Thyroid gland (tissue), 4 donors: ENCODE measurements at regions of chr11 and their contacts with region 1.

Region 1: GRCh38 chr11:46238967-46239800 is 38.3 kb upstream of the CREB3L1 start:
- DNase-seq: peak; percentile 77 to 80
- H3K4me3 ChIP-seq: peak overlapping the region in 1 of 3 donors; percentile 41
- H3K27ac ChIP-seq: peak overlapping the region in 2 of 3 donors; percentile 45 to 69
- H3K4me1 ChIP-seq: peaks cover 10 to 36% of the 10 kb centered on the region in 2 donors
- H3K27me3 ChIP-seq: no peaks in the 10 kb centered on the region
- CTCF ChIP-seq: peak; percentile 67 to 99 (median 97)
- POLR2A ChIP-seq: no peak

Region 2: GRCh38 chr11:46308631-46309419 is 69.6 kb after region 1 on chr11:
- intact Hi-C with region 1: loop called (anchors 2 kb)
- DNase-seq: peak; percentile 77
- H3K4me3 ChIP-seq: no peak overlapping the region
- H3K27ac ChIP-seq: no peak overlapping the region
- H3K4me1 ChIP-seq: no peaks in the 10 kb centered on the region
- H3K27me3 ChIP-seq: no peaks in the 10 kb centered on the region
- CTCF ChIP-seq: peak; percentile 78 to 84 (median 82)
- POLR2A ChIP-seq: no peak

Region 3: DNA sequence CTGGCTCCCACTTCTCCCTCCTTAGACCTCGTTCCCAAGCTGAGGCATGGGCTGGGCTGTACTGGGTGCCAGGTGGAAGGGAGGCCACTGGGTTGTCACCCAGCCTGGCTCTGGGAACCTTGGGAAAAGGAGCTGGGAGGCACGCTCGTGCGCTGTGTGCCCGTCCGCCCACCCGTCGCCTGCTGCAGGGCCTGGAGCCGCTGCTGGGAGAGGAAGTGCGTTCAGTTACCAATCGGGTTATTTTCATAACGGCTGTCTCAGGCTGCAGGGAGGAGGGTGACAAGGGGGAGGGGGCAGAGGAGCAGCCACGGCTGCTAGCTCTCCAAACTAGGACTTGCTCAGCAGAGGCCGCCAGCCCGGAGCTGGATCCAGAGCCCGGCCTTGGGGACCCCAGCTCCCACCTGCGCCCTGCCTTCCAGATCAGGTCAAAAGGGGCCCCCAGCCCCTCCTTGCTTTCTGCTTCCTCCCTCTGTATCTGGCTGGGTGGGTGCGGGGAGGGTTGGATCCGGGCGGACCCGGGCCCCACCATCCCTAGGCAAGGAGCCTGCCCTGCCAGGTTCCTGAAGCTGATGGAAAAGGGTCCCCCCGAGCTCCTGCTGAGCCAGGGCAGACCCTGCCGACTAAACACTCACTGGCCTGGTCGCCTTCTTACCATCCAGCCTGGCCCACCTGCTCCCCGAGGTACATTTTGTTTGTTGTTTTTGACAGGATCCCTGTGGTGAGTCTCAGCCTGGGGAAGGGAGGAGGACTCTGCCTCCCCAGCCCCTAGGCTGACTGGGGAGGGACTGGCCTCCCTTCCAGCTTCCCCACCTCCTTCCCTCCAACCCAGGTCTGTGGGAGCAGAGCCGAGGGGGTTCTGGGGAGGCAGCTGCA is 122.3 kb after region 1 on chr11:
- intact Hi-C with region 1: no loop called
- DNase-seq: peak; percentile 69 to 75
- H3K4me3 ChIP-seq: peak overlapping the region in 1 of 3 donors; percentile 15
- H3K27ac ChIP-seq: peak overlapping the region; percentile 41 to 66 (median 43)
- H3K4me1 ChIP-seq: peaks cover 18 to 24% of the 10 kb centered on the region in 2 donors
- H3K27me3 ChIP-seq: no peaks in the 10 kb centered on the region
- CTCF ChIP-seq: no peak
- POLR2A ChIP-seq: no peak

Region 4: DNA sequence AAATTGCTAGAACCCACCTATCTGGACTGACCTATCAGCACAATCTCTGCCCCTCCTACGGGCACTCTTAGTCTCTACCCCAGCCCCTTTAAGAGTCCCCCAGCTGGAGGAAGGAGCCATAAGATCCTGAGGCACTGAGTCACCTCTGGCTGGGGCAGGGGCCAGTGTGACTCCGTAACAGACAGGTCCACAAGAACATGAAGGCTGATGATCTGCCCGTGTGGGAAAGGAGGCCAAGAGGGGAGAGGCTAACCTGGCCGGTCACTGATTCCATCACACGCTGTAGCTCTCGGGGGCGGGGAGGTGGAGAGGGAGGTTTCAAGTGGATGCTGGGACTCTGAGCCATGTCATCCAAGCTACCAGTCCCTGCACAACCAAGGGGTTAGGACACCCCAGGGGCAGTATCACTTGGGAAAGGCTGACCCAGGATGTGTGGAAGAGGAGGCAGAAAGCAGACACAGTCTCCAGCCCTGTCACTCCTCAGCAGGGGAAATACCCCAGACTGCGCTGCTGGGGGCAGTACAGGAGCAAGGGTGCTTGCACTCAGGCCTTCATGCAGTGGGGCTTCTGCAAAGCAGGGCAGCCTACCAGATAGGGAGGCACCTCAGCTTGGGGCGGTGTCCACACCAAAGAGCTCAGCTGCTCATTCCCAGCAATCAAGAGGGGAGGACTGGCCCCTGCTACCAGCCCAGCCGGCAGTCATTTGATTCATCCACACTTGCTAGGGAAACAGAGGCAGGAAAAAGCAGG is 439.0 kb after region 1 on chr11:
- intact Hi-C with region 1: no loop called
- DNase-seq: no peak
- H3K4me3 ChIP-seq: no peak overlapping the region
- H3K27ac ChIP-seq: peak overlapping the region in 1 of 3 donors; percentile 13
- H3K4me1 ChIP-seq: peaks cover 27 to 36% of the 10 kb centered on the region in 2 donors
- H3K27me3 ChIP-seq: no peaks in the 10 kb centered on the region
- CTCF ChIP-seq: no peak
- POLR2A ChIP-seq: no peak